T-cell (primary cell): ENCODE measurements at regions of chr2 and their contacts with region 1.

Region 1: GRCh38 chr2:42102024-42102590 is 54.3 kb downstream of the PKDCC start:
- DNase-seq: peak; percentile 79 to 98 (median 96)
- ATAC-seq: peak; percentile 68 to 81 (median 70)
- H3K4me3 ChIP-seq: peak overlapping the region in 1 of 2 donors; percentile 46
- H3K4me3 Mint-ChIP-seq: peak overlapping the region in 2 of 3 donors; percentile 83
- H3K27ac ChIP-seq: peak overlapping the region; percentile 99
- H3K27ac Mint-ChIP-seq: no peak overlapping the region
- H3K4me1 ChIP-seq: peaks cover 66 to 97% of the 10 kb centered on the region in 2 experiments
- H3K4me1 Mint-ChIP-seq: peaks cover 48% of the 10 kb centered on the region in 3 donors
- H3K27me3 ChIP-seq: no peaks in the 10 kb centered on the region
- H3K27me3 Mint-ChIP-seq: no peaks in the 10 kb centered on the region

Region 2: GRCh38 chr2:42060718-42061619 is 41.1 kb before region 1 on chr2:
- CTCF ChIA-PET with region 1: no interaction called
- POLR2A ChIA-PET with region 1: no interaction called
- DNase-seq: no peak
- ATAC-seq: no peak
- H3K4me3 ChIP-seq: no peak overlapping the region
- H3K4me3 Mint-ChIP-seq: no peak overlapping the region
- H3K27ac ChIP-seq: no peak overlapping the region
- H3K27ac Mint-ChIP-seq: no peak overlapping the region
- H3K4me1 ChIP-seq: no peaks in the 10 kb centered on the region
- H3K4me1 Mint-ChIP-seq: no peaks in the 10 kb centered on the region
- H3K27me3 ChIP-seq: peaks cover 0 to 27% of the 10 kb centered on the region in 2 experiments
- H3K27me3 Mint-ChIP-seq: peaks cover 4 to 10% of the 10 kb centered on the region in 2 donors

Region 3: DNA sequence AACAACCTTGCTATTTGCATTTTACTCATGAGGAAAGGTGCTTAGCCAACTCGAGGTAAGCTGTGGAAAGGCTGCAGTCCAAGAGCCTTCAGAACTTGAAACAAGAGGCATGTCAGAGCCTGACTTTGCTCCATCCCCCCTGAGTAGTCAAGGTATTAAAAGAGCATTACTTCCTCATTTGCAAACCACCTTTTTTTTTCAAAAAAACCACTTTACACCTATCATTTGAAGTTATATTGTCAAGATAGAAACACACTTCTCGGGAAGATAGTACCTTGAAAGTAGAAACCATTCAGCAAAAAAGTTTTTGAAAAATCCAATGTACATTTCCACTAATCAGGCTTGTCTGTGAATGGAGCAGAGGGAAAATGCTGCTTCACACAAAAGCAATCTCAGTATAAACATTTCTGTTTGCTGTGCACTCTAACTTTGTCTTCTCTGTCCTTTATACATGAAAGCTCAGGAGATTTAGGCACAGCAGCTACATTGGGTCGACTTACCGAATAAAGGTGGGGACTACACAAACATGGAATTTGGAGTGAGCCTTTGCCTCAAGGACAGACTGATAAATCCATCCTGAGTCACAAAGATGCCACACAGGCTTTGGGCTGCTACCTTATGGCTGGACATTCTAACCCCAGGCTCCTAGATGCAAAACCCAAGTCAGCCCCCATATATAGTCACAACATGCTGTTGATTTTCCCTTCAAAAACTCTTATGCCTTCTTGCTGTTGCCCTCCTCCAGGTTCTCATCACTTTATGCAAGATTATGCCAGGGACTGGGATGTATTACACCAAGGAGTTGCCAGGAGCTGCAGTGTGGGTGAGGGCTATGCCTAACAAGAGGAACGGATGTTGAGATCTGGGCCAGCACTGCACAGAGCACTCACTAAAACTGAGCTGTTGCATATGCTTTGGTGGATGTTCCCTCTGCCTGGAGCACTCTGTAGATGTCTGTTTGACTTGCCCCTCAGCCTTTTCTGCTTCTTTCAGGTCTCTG is 25.6 kb after region 1 on chr2:
- CTCF ChIA-PET with region 1: interaction called, 4 to 42 read pairs
- POLR2A ChIA-PET with region 1: interaction called, 12 to 38 read pairs
- DNase-seq: peak in 24 of 35 experiments; percentile 8 to 67 (median 28)
- ATAC-seq: peak; percentile 52 to 59 (median 55)
- H3K4me3 ChIP-seq: no peak overlapping the region
- H3K4me3 Mint-ChIP-seq: peak overlapping the region; percentile 65 to 79 (median 70)
- H3K27ac ChIP-seq: peak overlapping the region; percentile 92
- H3K27ac Mint-ChIP-seq: peak overlapping the region; percentile 99
- H3K4me1 ChIP-seq: peaks cover 85 to 87% of the 10 kb centered on the region in 2 experiments
- H3K4me1 Mint-ChIP-seq: peaks cover 92 to 96% (median 95%) of the 10 kb centered on the region in 3 donors
- H3K27me3 ChIP-seq: no peaks in the 10 kb centered on the region
- H3K27me3 Mint-ChIP-seq: no peaks in the 10 kb centered on the region